PC-9 (cell line): ENCODE measurements at regions of chr12 and their contacts with region 1.

Region 1: GRCh38 chr12:72017054-72017651 is 78.5 kb downstream of the TPH2 start:
- DNase-seq: peak; percentile 39 to 76
- H3K4me3 ChIP-seq: no peak overlapping the region
- H3K27ac ChIP-seq: no peak overlapping the region
- H3K4me1 ChIP-seq: no peaks in the 10 kb centered on the region
- H3K27me3 ChIP-seq: no peaks in the 10 kb centered on the region
- CTCF ChIP-seq: peak; percentile 78

Region 2: DNA sequence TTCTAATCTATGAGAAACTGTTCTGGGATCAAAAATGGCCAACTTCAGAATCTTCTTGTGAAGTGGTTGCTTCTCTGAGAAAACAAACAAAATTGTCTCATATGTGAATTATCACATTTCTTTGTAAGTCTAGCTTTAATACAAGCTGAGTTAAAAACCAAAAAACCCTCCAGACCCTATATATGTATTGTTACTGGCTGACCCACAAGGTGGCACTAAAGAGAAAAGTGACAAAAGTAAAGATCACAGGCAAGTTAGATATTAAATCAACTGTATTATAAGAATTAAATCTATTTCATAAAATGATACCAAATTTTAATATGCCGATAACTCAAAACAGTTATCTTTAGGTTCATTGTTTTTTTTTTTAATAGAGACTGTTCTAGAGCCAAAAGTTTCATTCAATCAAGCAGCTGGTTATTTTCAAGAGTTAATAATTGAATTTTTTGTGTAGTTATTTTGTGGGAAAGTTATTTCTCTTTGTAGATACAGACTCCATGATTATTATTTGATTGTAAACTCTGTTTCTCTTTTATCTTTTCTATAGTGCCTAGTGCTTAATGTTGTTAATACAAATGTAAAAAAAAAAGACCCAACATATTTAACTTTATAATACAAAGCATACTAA is 247.5 kb after region 1 on chr12:
- CTCF ChIA-PET with region 1: interaction called, 17 read pairs
- POLR2A ChIA-PET with region 1: no interaction called
- intact Hi-C with region 1: no loop called
- DNase-seq: no peak
- H3K4me3 ChIP-seq: no peak overlapping the region
- H3K27ac ChIP-seq: no peak overlapping the region
- H3K4me1 ChIP-seq: no peaks in the 10 kb centered on the region
- H3K27me3 ChIP-seq: no peaks in the 10 kb centered on the region
- CTCF ChIP-seq: peak; percentile 69

Region 3: DNA sequence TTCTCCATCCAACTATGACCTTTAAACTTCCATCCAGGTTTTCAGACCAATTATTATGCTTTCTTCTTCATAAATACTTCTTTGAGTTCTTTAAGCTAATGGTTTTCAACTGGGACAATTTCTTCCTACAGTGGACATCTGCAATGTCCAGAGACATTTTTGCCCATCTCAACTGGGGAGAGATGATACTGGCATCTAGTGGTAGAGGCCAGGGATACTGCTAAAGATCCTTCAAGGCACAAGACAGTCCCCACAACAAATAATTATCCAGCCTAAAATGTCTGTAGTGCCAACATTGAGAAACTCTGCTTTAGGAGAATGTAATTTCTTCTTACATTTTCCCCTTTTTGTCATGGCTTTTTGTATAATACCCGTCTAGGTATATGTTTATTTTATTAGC is 265.6 kb after region 1 on chr12:
- CTCF ChIA-PET with region 1: no interaction called
- POLR2A ChIA-PET with region 1: no interaction called
- intact Hi-C with region 1: loop called (anchors 2 kb)
- DNase-seq: no peak
- H3K4me3 ChIP-seq: no peak overlapping the region
- H3K27ac ChIP-seq: no peak overlapping the region
- H3K4me1 ChIP-seq: no peaks in the 10 kb centered on the region
- H3K27me3 ChIP-seq: no peaks in the 10 kb centered on the region
- CTCF ChIP-seq: peak; percentile 27; the same call in 1 of the 2 replicates